ENCODE measurements at regions of chr11 and their contacts with region 1.

Region 1: GRCh38 chr11:18731949-18732821 is 6.2 kb upstream of the IGSF22 start:
- DNase-seq: peak; percentile 67 to 73 (median 68)
- ATAC-seq: peak; percentile 80
- H3K4me3 ChIP-seq: no peak overlapping the region
- H3K27ac ChIP-seq: no peak overlapping the region
- H3K4me1 ChIP-seq: peaks cover 0 to 3% of the 10 kb centered on the region in 2 experiments; a peak in 1 of 5 replicates
- H3K27me3 ChIP-seq: peaks cover 16 to 56% of the 10 kb centered on the region in 2 experiments
- CTCF ChIP-seq: peak; percentile 76 to 95 (median 90)
- EP300 ChIP-seq: no peak
- POLR2A ChIP-seq: no peak
- RAD21 ChIP-seq: peak; percentile 81 to 84

Region 2: GRCh38 chr11:18243783-18244362 is 488.3 kb before region 1 on chr11:
- CTCF ChIA-PET with region 1: interaction called, 3 read pairs
- POLR2A ChIA-PET with region 1: no interaction called
- in situ Hi-C with region 1: loop called (anchors 10 kb)
- intact Hi-C with region 1: loop called (anchors 10 kb)
- DNase-seq: peak; percentile 61 to 80 (median 66)
- ATAC-seq: peak; percentile 82
- H3K4me3 ChIP-seq: no peak overlapping the region
- H3K27ac ChIP-seq: no peak overlapping the region
- H3K4me1 ChIP-seq: no peaks in the 10 kb centered on the region
- H3K27me3 ChIP-seq: peaks cover 5 to 8% of the 10 kb centered on the region in 2 experiments; a peak in 3 of 5 replicates
- CTCF ChIP-seq: peak; percentile 75 to 87 (median 79)
- EP300 ChIP-seq: no peak
- POLR2A ChIP-seq: no peak
- RAD21 ChIP-seq: peak; percentile 60 to 85

Region 3: DNA sequence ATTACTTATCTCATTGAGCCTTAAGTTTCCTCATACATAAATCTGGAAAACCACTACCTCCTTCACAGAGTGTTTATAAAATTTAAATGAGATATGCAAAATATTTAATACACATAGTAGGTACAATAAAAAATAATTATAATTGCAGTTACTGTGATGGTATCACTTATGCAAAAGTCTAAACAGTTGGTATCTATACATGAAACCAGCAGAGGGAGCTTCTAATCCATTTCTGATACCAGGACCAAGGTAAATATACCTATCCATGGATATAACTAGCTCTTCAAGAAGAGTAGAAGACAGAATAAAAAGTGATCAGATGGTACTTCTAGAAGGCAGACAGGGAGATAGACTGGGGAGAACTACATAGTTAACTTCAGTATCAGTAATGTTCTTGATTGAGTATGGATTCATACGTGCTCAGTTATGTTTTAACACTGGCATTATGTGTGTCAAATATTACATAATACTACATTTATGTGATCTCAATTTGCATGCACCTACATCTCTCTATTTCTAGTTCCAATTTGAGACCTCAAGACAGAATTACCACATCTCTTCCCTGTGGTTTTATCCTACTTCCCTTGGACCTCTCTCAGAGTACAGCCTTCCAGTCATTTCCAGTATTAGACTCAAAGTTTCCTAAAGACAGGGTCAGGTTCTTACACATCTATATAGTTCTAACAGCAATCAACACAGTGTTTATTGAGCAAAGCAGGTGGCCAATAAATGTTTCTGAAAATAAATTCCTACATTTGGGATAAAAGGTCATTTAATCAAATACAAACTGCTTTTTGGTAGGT is 191.8 kb before region 1 on chr11:
- CTCF ChIA-PET with region 1: interaction called, 19 read pairs
- POLR2A ChIA-PET with region 1: no interaction called
- in situ Hi-C with region 1: loop called (anchors 25 kb)
- intact Hi-C with region 1: loop called (anchors 1 kb)
- DNase-seq: peak in 1 of 4 experiments; percentile 31
- ATAC-seq: peak; percentile 75; the same call in 2 of the 3 replicates
- H3K4me3 ChIP-seq: no peak overlapping the region
- H3K27ac ChIP-seq: no peak overlapping the region
- H3K4me1 ChIP-seq: no peaks in the 10 kb centered on the region
- H3K27me3 ChIP-seq: no peaks in the 10 kb centered on the region
- CTCF ChIP-seq: peak; percentile 24 to 70 (median 31); a peak in 3 of 6 replicates
- EP300 ChIP-seq: no peak
- POLR2A ChIP-seq: no peak
- RAD21 ChIP-seq: peak; percentile 69 to 79

Region 4: DNA sequence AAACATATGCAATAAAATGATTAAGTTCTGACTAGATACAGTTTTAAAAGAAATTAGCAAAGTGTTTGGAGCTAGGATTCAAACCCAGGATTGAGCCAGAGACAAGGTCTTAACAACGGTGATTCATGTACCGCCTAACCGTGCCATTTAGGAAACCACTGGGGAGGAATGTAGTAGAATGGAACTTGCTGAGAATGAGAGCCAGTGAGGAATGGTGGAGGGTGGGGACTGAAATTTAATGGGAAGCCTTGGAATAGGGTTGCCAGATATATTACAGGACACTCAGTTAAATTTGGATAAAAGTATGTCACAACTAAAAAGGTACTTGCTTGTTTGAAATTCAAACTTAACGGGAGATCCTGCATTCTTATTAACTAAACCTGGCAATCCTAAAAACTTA is 64.1 kb before region 1 on chr11:
- CTCF ChIA-PET with region 1: interaction called, 3 read pairs
- POLR2A ChIA-PET with region 1: no interaction called
- in situ Hi-C with region 1: no loop called
- intact Hi-C with region 1: loop called (anchors 1 kb)
- DNase-seq: no peak
- ATAC-seq: no peak
- H3K4me3 ChIP-seq: no peak overlapping the region
- H3K27ac ChIP-seq: no peak overlapping the region
- H3K4me1 ChIP-seq: peaks cover 5 to 6% of the 10 kb centered on the region in 2 experiments
- H3K27me3 ChIP-seq: peaks cover 4 to 7% of the 10 kb centered on the region in 2 experiments; a peak in 3 of 5 replicates
- CTCF ChIP-seq: no peak
- EP300 ChIP-seq: no peak
- POLR2A ChIP-seq: no peak
- RAD21 ChIP-seq: no peak

Region 5: GRCh38 chr11:18853086-18853720 is 121.0 kb after region 1 on chr11:
- CTCF ChIA-PET with region 1: no interaction called
- POLR2A ChIA-PET with region 1: no interaction called
- in situ Hi-C with region 1: no loop called
- intact Hi-C with region 1: no loop called
- DNase-seq: peak in 1 of 4 experiments; percentile 17
- ATAC-seq: peak; percentile 83
- H3K4me3 ChIP-seq: no peak overlapping the region
- H3K27ac ChIP-seq: no peak overlapping the region
- H3K4me1 ChIP-seq: no peaks in the 10 kb centered on the region
- H3K27me3 ChIP-seq: no peaks in the 10 kb centered on the region; a peak in 1 of 5 replicates
- CTCF ChIP-seq: peak; percentile 52 to 57 (median 55); a peak in 4 of 6 replicates
- EP300 ChIP-seq: no peak
- POLR2A ChIP-seq: no peak
- RAD21 ChIP-seq: peak in 1 of 2 experiments; percentile 58; a peak in 2 of 4 replicates

Measured in K562 (cell line).